Activated B cell treated with CpG ODN at 0.5 μM for 24 hours (primary cell): ENCODE measurements at regions of chr1 and their contacts with region 1.

Region 1: GRCh38 chr1:160837558-160838205 is 25.0 kb downstream of the CD244 start:
- DNase-seq: peak; percentile 66
- ATAC-seq: peak; percentile 97
- H3K4me3 Mint-ChIP-seq: no peak overlapping the region
- H3K27ac Mint-ChIP-seq: peak overlapping the region; percentile 84
- H3K4me1 Mint-ChIP-seq: peaks cover 36% of the 10 kb centered on the region
- H3K27me3 Mint-ChIP-seq: no peaks in the 10 kb centered on the region
- CTCF ChIP-seq: no peak

Region 2: GRCh38 chr1:160877221-160877620 is 39.5 kb after region 1 on chr1:
- CTCF ChIA-PET with region 1: interaction called, 3 read pairs
- POLR2A ChIA-PET with region 1: no interaction called
- intact Hi-C with region 1: loop called (anchors 1 kb)
- DNase-seq: no peak
- ATAC-seq: peak; percentile 28
- H3K4me3 Mint-ChIP-seq: no peak overlapping the region
- H3K27ac Mint-ChIP-seq: no peak overlapping the region
- H3K4me1 Mint-ChIP-seq: peaks cover 14% of the 10 kb centered on the region
- H3K27me3 Mint-ChIP-seq: peaks cover 6% of the 10 kb centered on the region
- CTCF ChIP-seq: no peak

Region 3: DNA sequence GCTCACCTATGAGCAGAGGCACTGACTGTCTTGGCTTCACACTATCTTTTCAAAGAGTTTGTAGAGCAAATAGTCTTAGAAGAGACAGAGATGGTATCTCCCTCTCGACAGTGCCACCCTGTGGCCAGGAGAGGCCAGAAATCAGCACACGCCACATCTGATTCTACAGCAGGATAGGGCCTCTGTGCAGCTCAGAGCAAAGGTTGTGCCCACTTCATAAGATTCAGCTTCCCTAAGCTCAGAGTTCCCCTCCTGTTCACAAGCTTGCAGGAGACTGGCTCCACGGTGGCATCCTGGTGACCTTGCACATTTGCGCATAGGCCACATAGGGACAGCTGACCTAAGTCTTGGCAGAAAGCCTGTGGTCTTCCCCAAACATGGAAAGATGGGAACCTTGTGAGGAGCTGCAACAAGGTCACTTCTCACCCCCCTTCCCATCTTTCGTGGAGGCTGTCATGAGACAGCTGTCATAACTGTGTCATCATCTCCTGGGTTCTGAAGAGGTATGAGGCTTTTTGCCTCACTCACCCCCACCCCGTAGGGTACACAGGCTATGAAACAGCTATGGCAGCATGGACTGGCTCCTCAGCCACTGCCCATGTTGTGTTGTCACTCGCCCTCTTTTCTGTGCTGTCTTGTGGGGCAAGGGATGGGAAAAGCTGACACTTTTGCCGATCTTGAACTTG is 113.9 kb after region 1 on chr1:
- CTCF ChIA-PET with region 1: interaction called, 111 read pairs
- POLR2A ChIA-PET with region 1: interaction called, 4 read pairs
- intact Hi-C with region 1: loop called (anchors 1 kb)
- DNase-seq: peak; percentile 46
- ATAC-seq: peak; percentile 89
- H3K4me3 Mint-ChIP-seq: no peak overlapping the region
- H3K27ac Mint-ChIP-seq: no peak overlapping the region
- H3K4me1 Mint-ChIP-seq: peaks cover 7% of the 10 kb centered on the region
- H3K27me3 Mint-ChIP-seq: no peaks in the 10 kb centered on the region
- CTCF ChIP-seq: no peak

Region 4: GRCh38 chr1:161089171-161089924 is 251.7 kb after region 1 on chr1 and contains the start of gene NECTIN4:
- CTCF ChIA-PET with region 1: no interaction called
- POLR2A ChIA-PET with region 1: no interaction called
- intact Hi-C with region 1: no loop called
- DNase-seq: no peak
- ATAC-seq: no peak
- H3K4me3 Mint-ChIP-seq: no peak within 1 kb of the TSS
- H3K27ac Mint-ChIP-seq: no peak within 1 kb of the TSS
- H3K4me1 Mint-ChIP-seq: peaks cover 1% of the 10 kb centered on the region
- H3K27me3 Mint-ChIP-seq: peaks cover 2% of the 10 kb centered on the region
- CTCF ChIP-seq: no peak
- total RNA-seq, gene NECTIN4: not detected in 2 replicates